Dorsolateral prefrontal cortex (tissue), 120 donors: ENCODE measurements at regions of chr5 and their contacts with region 1.

Region 1: GRCh38 chr5:91101600-91102379 is 281.3 kb downstream of the ARRDC3 start:
- DNase-seq: peak in 9 of 10 donors; percentile 51 to 72 (median 58)
- H3K4me3 ChIP-seq: peak overlapping the region in 5 of 59 donors; percentile 1 to 17 (median 13)
- H3K27ac ChIP-seq: peak overlapping the region in 15 of 59 donors; percentile 0 to 42 (median 19)
- H3K27me3 ChIP-seq: no peaks in the 10 kb centered on the region
- CTCF ChIP-seq: peak; percentile 37 to 95 (median 85)

Region 2: GRCh38 chr5:91162534-91163381 is 61.0 kb after region 1 on chr5:
- intact Hi-C with region 1: loop called in 1 of 2 experiments (anchors 2 kb)
- DNase-seq: peak in 5 of 10 donors; percentile 34 to 69 (median 51)
- H3K4me3 ChIP-seq: no peak overlapping the region
- H3K27ac ChIP-seq: peak overlapping the region in 45 of 59 donors; percentile 3 to 89 (median 56)
- H3K27me3 ChIP-seq: no peaks in the 10 kb centered on the region
- CTCF ChIP-seq: no peak

Region 3: GRCh38 chr5:91219803-91220371 is 118.1 kb after region 1 on chr5:
- intact Hi-C with region 1: loop called in 1 of 2 experiments (anchors 5 kb)
- DNase-seq: peak in 2 of 10 donors; percentile 48 to 53
- H3K4me3 ChIP-seq: no peak overlapping the region
- H3K27ac ChIP-seq: no peak overlapping the region
- H3K27me3 ChIP-seq: no peaks in the 10 kb centered on the region
- CTCF ChIP-seq: peak in 50 of 56 donors; percentile 12 to 69 (median 48)

Region 4: GRCh38 chr5:91280362-91281269 is 178.8 kb after region 1 on chr5:
- intact Hi-C with region 1: loop called in 1 of 2 experiments (anchors 10 kb)
- DNase-seq: peak; percentile 85 to 96 (median 91)
- H3K4me3 ChIP-seq: peak overlapping the region; percentile 54 to 88 (median 68)
- H3K27ac ChIP-seq: peak overlapping the region; percentile 80 to 97 (median 91)
- H3K27me3 ChIP-seq: no peaks in the 10 kb centered on the region
- CTCF ChIP-seq: peak in 19 of 56 donors; percentile 7 to 48 (median 25)